Left ventricle myocardium inferior (tissue), 1 donor: ENCODE measurements at regions of chr3 and their contacts with region 1.

Region 1: GRCh38 chr3:145673838-145674237 is 487.1 kb downstream of the PLOD2 start:
- DNase-seq: no peak
- H3K4me3 ChIP-seq: no peak overlapping the region
- H3K27ac ChIP-seq: no peak overlapping the region
- H3K4me1 ChIP-seq: no peaks in the 10 kb centered on the region
- H3K27me3 ChIP-seq: no peaks in the 10 kb centered on the region
- CTCF ChIP-seq: no peak

Region 2: GRCh38 chr3:145842302-145842902 is 168.6 kb after region 1 on chr3:
- intact Hi-C with region 1: loop called (anchors 10 kb)
- DNase-seq: no peak
- H3K4me3 ChIP-seq: no peak overlapping the region
- H3K27ac ChIP-seq: no peak overlapping the region
- H3K4me1 ChIP-seq: no peaks in the 10 kb centered on the region
- H3K27me3 ChIP-seq: no peaks in the 10 kb centered on the region
- CTCF ChIP-seq: no peak